Right cardiac atrium (tissue), 5 donors: ENCODE measurements at regions of chr5 and their contacts with region 1.

Region 1: GRCh38 chr5:168275940-168276339 is 15.5 kb upstream of the WWC1 start:
- DNase-seq: no peak
- ATAC-seq: no peak
- H3K4me3 ChIP-seq: no peak overlapping the region
- H3K27ac ChIP-seq: no peak overlapping the region
- H3K4me1 ChIP-seq: no peaks in the 10 kb centered on the region
- H3K27me3 ChIP-seq: no peaks in the 10 kb centered on the region

Region 2: GRCh38 chr5:168537176-168537575 is 261.2 kb after region 1 on chr5:
- intact Hi-C with region 1: loop called in 1 of 4 experiments (anchors 5 kb)
- DNase-seq: no peak
- ATAC-seq: no peak
- H3K4me3 ChIP-seq: no peak overlapping the region
- H3K27ac ChIP-seq: no peak overlapping the region
- H3K4me1 ChIP-seq: no peaks in the 10 kb centered on the region
- H3K27me3 ChIP-seq: no peaks in the 10 kb centered on the region